Activated CD4-positive, alpha-beta T cell treated with anti-CD3 and anti-CD28 coated beads for 36 hours (primary cell): ENCODE measurements at regions of chr19 and their contacts with region 1.

Region 1: GRCh38 chr19:58439576-58440554 is at the start of gene ZNF132:
- DNase-seq: peak; percentile 96
- ATAC-seq: peak; percentile 98
- H3K4me3 Mint-ChIP-seq: peak within 1 kb of the TSS; percentile 82
- H3K27ac Mint-ChIP-seq: peak within 1 kb of the TSS; percentile 95
- H3K4me1 Mint-ChIP-seq: peaks cover 29% of the 10 kb centered on the region
- H3K27me3 Mint-ChIP-seq: no peaks in the 10 kb centered on the region
- total RNA-seq, gene ZNF132: 3.3 to 4.4 TPM

Region 2: DNA sequence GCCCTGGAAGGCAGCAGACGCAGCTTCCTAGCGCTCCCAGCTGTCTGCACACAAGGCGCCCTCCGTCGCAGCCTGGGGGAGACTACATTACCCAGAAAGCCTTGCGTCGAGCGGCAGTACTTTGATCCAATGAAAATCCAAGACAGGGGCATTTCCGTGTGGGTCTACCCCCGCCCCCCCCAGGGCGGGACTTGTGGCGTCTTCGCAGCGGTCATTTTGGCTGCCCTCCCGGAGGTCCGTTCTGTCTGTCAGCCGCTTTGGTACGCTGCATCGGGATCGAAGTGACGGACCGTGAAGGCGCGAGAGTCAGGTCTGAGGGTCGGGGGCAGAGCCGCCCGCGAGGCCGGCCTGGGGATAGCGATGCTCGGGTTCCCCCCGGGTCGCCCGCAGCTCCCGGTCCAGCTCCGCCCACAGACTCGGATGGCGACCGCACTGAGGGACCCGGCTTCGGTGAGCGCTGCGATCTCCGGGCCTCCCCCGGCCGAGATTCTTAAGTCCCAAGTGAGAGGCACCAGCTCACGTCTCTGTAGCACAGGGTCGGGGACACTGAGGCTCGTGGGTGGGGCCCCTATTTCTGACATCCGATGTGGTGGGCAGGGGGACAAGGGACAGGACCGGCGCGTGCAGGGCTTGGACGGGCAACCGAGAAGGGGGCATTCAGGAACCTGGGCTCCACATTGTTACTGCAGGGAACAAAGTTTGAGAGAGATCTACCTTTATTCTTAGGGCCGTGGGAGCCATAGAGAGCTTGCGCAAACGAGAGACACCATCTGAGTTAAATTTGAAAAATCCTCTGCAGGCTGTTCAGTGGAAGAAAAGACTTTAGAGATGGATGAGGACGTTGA is 806.7 kb before region 1 on chr19 and contains the start of gene ZNF211:
- CTCF ChIA-PET with region 1: no interaction called
- POLR2A ChIA-PET with region 1: no interaction called
- intact Hi-C with region 1: loop called in 1 of 2 experiments (anchors 1 kb)
- DNase-seq: peak; percentile 91
- ATAC-seq: peak; percentile 100
- H3K4me3 Mint-ChIP-seq: peak within 1 kb of the TSS; percentile 96
- H3K27ac Mint-ChIP-seq: peak within 1 kb of the TSS; percentile 86
- H3K4me1 Mint-ChIP-seq: peaks cover 19% of the 10 kb centered on the region
- H3K27me3 Mint-ChIP-seq: no peaks in the 10 kb centered on the region
- total RNA-seq, gene ZNF211: 8.9 to 9.5 TPM

Region 3: GRCh38 chr19:57872450-57872849 is 567.4 kb before region 1 on chr19:
- CTCF ChIA-PET with region 1: no interaction called
- POLR2A ChIA-PET with region 1: no interaction called
- intact Hi-C with region 1: no loop called
- DNase-seq: no peak
- ATAC-seq: no peak
- H3K4me3 Mint-ChIP-seq: no peak overlapping the region
- H3K27ac Mint-ChIP-seq: no peak overlapping the region
- H3K4me1 Mint-ChIP-seq: no peaks in the 10 kb centered on the region
- H3K27me3 Mint-ChIP-seq: no peaks in the 10 kb centered on the region

Region 4: GRCh38 chr19:58278157-58279041 is 161.5 kb before region 1 on chr19 and contains the start of gene ZNF8:
- CTCF ChIA-PET with region 1: no interaction called
- POLR2A ChIA-PET with region 1: no interaction called
- intact Hi-C with region 1: loop called in 1 of 2 experiments (anchors 1 kb)
- DNase-seq: peak; percentile 99
- ATAC-seq: peak; percentile 98
- H3K4me3 Mint-ChIP-seq: peak within 1 kb of the TSS; percentile 98
- H3K27ac Mint-ChIP-seq: peak within 1 kb of the TSS; percentile 95
- H3K4me1 Mint-ChIP-seq: peaks cover 28% of the 10 kb centered on the region
- H3K27me3 Mint-ChIP-seq: no peaks in the 10 kb centered on the region
- total RNA-seq, gene ZNF8: 4.4 to 4.5 TPM

Region 5: GRCh38 chr19:58362272-58362994 is 77.4 kb before region 1 on chr19 and contains the start of gene ZNF497:
- CTCF ChIA-PET with region 1: no interaction called
- POLR2A ChIA-PET with region 1: no interaction called
- intact Hi-C with region 1: loop called in 1 of 2 experiments (anchors 1 kb)
- DNase-seq: peak; percentile 99
- ATAC-seq: peak; percentile 94
- H3K4me3 Mint-ChIP-seq: peak within 1 kb of the TSS; percentile 86
- H3K27ac Mint-ChIP-seq: peak within 1 kb of the TSS; percentile 93
- H3K4me1 Mint-ChIP-seq: peaks cover 7% of the 10 kb centered on the region
- H3K27me3 Mint-ChIP-seq: no peaks in the 10 kb centered on the region
- total RNA-seq, gene ZNF497: 1.1 to 1.5 TPM

Region 6: DNA sequence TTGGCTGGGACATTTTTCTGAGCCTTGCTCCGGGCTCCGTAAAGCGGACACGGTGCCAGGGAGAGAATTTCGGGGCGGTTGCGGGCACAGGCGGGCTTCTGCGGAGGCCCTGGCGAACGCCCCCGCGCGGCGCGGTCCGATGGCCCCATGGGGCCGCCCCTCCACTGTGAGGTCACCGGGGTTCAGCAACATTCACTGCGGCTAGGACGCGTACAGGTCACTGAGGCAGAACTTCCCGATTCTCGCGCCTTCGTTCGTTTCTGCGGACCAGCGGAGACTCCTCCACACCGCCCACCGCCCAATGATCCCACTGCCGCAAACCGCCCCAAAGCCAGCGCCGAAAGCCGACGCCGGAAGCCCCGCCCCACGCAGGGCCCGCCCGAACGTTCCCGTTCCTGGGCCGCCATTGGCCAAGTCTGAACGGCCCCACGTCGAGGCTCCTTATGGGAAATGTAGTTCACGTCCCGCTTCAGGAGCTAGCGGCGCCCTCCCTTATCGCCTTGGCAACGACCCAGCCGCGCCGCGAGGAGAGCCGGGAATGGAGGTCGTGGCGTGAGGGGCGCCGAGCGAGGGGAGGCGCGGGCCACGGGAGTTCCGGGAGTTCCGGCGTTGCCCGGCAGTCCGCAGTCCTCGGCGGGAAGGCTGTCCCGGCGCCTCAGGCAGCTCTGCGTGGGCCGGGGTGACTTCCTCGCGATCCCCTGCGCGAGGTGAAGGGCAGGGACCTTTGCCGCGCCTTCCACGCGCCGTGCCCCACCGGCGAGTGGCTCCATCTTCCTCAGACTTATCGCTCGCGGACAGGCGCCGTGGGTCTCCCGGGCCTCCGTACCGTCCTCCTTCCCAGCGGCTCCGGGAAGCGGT is 31.5 kb before region 1 on chr19 and contains the start of gene ZNF584:
- CTCF ChIA-PET with region 1: no interaction called
- POLR2A ChIA-PET with region 1: no interaction called
- intact Hi-C with region 1: loop called (anchors 1 kb)
- DNase-seq: peak; percentile 97
- ATAC-seq: peak; percentile 97
- H3K4me3 Mint-ChIP-seq: peak within 1 kb of the TSS; percentile 84
- H3K27ac Mint-ChIP-seq: peak within 1 kb of the TSS; percentile 92
- H3K4me1 Mint-ChIP-seq: peaks cover 29% of the 10 kb centered on the region
- H3K27me3 Mint-ChIP-seq: no peaks in the 10 kb centered on the region
- total RNA-seq, gene ZNF584: 9.9 to 11.2 TPM

Region 7: DNA sequence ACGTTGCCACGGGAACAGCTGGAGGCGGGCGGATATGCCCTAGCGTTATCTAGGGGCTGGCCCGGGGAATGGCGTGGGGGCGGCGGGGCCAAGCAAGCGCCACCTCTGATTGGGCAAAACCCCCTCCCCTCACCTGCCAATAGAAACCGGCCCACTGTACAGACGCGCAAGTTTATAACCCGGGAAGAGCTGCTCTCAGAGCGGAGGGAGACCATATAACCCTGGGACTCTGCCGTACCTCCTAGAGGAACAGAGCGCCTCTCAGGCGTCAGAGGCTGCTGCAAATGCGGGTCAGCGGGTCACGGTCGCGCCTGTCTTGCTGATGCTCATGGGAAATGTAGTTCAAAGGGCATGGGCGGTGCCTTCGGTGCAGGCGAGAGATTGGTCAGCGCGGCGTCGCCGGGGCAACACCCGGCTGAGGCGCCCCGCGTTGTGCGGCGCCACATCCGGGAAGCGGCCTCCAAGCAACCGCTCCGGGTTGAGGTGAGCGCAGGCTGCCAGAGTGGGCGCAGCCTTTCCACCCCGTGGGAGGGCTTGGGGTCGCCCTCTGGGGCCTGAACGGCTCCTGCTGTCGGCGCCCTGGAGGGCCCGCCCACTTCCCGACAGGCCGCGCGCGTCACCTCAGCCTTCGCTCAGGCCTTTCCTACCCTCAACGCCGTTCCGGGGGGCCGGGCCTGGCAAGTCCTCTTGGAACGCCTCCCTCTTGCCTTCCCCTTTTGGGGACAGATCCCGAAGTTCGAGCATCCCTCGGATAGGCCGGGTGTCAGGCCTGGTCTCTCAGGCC is 36.0 kb after region 1 on chr19 and contains the start of gene ZNF446:
- CTCF ChIA-PET with region 1: no interaction called
- POLR2A ChIA-PET with region 1: interaction called, 3 read pairs
- intact Hi-C with region 1: loop called in 1 of 2 experiments (anchors 1 kb)
- DNase-seq: peak; percentile 98
- ATAC-seq: peak; percentile 92
- H3K4me3 Mint-ChIP-seq: peak within 1 kb of the TSS; percentile 83
- H3K27ac Mint-ChIP-seq: peak within 1 kb of the TSS; percentile 96
- H3K4me1 Mint-ChIP-seq: peaks cover 14% of the 10 kb centered on the region
- H3K27me3 Mint-ChIP-seq: no peaks in the 10 kb centered on the region
- total RNA-seq, gene ZNF446: 4.2 to 4.7 TPM

Region 8: DNA sequence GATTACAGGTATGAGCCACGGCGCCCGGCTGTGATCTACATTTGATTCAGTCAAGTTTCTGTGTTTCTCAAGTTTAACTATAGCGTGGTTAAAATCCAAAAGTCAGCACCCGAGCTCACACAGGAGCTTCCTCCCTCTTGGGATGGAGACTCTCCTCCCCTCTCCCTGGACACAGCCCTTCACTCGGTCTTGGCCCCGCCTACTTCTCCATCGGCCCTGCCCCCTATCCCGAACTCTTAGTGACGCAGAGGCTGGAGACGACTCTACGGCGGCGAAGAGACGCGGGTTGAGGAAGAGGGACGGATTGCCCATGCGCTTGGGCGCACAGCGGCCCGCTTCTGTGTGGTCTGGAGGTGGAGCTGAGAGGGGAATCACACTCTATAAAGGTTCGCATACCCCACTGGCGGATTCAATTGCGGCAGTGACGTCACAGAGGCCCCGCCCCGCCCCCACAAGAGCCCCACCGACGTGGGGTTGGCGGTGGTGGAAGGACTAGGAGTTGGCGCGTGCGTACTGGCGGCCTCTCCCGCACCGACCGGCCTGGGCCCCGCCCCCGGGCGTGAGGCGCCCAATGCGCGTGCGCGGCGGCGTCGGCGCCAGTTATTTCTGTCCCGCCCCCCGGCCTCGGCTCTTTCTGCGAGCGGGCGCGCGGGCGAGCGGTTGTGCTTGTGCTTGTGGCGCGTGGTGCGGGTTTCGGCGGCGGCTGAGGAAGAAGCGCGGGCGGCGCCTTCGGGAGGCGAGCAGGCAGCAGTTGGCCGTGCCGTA is 104.1 kb after region 1 on chr19 and contains the start of gene TRIM28:
- CTCF ChIA-PET with region 1: no interaction called
- POLR2A ChIA-PET with region 1: no interaction called
- intact Hi-C with region 1: no loop called
- DNase-seq: peak; percentile 100
- ATAC-seq: peak; percentile 98
- H3K4me3 Mint-ChIP-seq: peak within 1 kb of the TSS; percentile 96
- H3K27ac Mint-ChIP-seq: peak within 1 kb of the TSS; percentile 97
- H3K4me1 Mint-ChIP-seq: peaks cover 34% of the 10 kb centered on the region
- H3K27me3 Mint-ChIP-seq: peaks cover 4% of the 10 kb centered on the region
- total RNA-seq, gene TRIM28: 481 to 758 TPM

Region 9: GRCh38 chr19:58572818-58573657 is 133.2 kb after region 1 on chr19 and contains the start of gene MZF1:
- CTCF ChIA-PET with region 1: no interaction called
- POLR2A ChIA-PET with region 1: no interaction called
- intact Hi-C with region 1: loop called in 1 of 2 experiments (anchors 1 kb)
- DNase-seq: peak; percentile 100
- ATAC-seq: peak; percentile 69
- H3K4me3 Mint-ChIP-seq: peak within 1 kb of the TSS; percentile 95
- H3K27ac Mint-ChIP-seq: peak within 1 kb of the TSS; percentile 100
- H3K4me1 Mint-ChIP-seq: peaks cover 38% of the 10 kb centered on the region
- H3K27me3 Mint-ChIP-seq: no peaks in the 10 kb centered on the region
- total RNA-seq, gene MZF1: 14.3 to 15.0 TPM